ENCODE measurements at regions of chr5 and their contacts with region 1.

Region 1: DNA sequence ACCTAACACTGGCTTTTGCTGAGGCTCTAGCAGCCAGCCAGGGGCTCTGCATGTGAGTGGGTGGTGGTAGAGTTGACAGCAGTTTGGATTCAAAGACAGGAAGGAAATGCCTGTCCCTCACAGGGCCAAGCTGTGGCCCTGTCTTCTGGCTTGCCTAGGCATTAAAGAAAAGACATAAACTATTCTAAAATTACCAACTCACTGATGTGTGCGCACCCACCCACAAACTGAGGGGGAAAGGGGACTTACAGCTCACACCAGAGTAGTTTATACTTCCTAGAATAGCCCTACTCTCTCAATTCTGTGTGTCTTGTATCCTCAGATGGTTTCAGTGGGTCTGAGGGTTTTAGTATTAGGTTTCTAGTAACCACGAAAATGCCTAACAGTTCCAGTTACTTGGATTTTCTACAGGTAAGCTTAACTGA is 18.3 kb upstream of the IL13 start:
- DNase-seq: peak; percentile 52
- H3K4me3 Mint-ChIP-seq: no peak overlapping the region
- H3K27ac Mint-ChIP-seq: peak overlapping the region; percentile 18
- H3K4me1 Mint-ChIP-seq: peaks cover 76% of the 10 kb centered on the region
- H3K27me3 Mint-ChIP-seq: no peaks in the 10 kb centered on the region

Region 2: GRCh38 chr5:132446669-132447068 is 193.0 kb before region 1 on chr5:
- CTCF ChIA-PET with region 1: no interaction called
- POLR2A ChIA-PET with region 1: no interaction called
- intact Hi-C with region 1: no loop called
- DNase-seq: peak; percentile 8
- H3K4me3 Mint-ChIP-seq: no peak overlapping the region
- H3K27ac Mint-ChIP-seq: no peak overlapping the region
- H3K4me1 Mint-ChIP-seq: peaks cover 63% of the 10 kb centered on the region
- H3K27me3 Mint-ChIP-seq: no peaks in the 10 kb centered on the region

Region 3: GRCh38 chr5:132466433-132467286 is 173.1 kb before region 1 on chr5:
- CTCF ChIA-PET with region 1: no interaction called
- POLR2A ChIA-PET with region 1: no interaction called
- intact Hi-C with region 1: no loop called
- DNase-seq: peak; percentile 85
- H3K4me3 Mint-ChIP-seq: peak overlapping the region; percentile 68
- H3K27ac Mint-ChIP-seq: peak overlapping the region; percentile 75
- H3K4me1 Mint-ChIP-seq: peaks cover 86% of the 10 kb centered on the region
- H3K27me3 Mint-ChIP-seq: no peaks in the 10 kb centered on the region

Region 4: DNA sequence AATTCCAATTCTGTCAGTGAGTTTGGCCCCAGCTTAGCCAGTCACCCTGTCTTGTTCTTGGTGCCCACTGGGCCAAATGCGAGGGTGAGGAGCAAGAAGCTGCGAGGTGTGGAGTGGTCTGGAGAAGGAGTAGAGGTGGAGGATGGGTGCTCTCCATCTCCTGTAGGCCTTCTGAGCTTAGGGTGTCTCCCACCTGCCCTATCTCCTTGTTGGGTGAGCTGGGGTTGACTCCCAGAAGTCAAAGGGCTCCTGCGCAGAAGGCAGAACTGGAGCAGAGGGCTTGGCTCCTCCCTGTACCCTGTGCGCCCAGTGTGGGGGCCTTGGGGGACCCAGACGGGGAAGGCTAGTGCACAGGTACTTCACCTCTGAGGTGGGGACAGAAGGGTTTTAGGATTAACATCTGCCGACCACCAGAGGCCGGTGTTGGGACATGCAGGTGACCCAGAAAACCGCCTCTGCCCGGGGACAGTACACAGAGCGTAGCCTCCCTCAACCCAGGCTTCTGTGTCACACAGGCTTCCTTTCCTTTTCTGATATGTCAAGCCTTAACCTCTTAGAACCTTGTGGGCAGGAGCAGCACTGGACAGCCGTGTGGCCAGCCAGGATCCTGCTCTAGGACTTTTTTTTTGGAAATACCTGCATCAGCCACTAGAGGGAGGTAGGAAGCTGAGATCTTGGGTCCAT is 113.3 kb before region 1 on chr5:
- CTCF ChIA-PET with region 1: interaction called, 10 read pairs
- POLR2A ChIA-PET with region 1: interaction called, 3 read pairs
- intact Hi-C with region 1: loop called (anchors 1 kb)
- DNase-seq: peak; percentile 48
- H3K4me3 Mint-ChIP-seq: no peak overlapping the region
- H3K27ac Mint-ChIP-seq: no peak overlapping the region
- H3K4me1 Mint-ChIP-seq: peaks cover 38% of the 10 kb centered on the region
- H3K27me3 Mint-ChIP-seq: peaks cover 2% of the 10 kb centered on the region

Region 5: GRCh38 chr5:132622608-132623007 is 17.1 kb before region 1 on chr5:
- CTCF ChIA-PET with region 1: interaction called, 3 read pairs
- POLR2A ChIA-PET with region 1: interaction called, 4 read pairs
- intact Hi-C with region 1: loop called (anchors 1 kb)
- DNase-seq: no peak
- H3K4me3 Mint-ChIP-seq: no peak overlapping the region
- H3K27ac Mint-ChIP-seq: no peak overlapping the region
- H3K4me1 Mint-ChIP-seq: peaks cover 13% of the 10 kb centered on the region
- H3K27me3 Mint-ChIP-seq: no peaks in the 10 kb centered on the region

Region 6: DNA sequence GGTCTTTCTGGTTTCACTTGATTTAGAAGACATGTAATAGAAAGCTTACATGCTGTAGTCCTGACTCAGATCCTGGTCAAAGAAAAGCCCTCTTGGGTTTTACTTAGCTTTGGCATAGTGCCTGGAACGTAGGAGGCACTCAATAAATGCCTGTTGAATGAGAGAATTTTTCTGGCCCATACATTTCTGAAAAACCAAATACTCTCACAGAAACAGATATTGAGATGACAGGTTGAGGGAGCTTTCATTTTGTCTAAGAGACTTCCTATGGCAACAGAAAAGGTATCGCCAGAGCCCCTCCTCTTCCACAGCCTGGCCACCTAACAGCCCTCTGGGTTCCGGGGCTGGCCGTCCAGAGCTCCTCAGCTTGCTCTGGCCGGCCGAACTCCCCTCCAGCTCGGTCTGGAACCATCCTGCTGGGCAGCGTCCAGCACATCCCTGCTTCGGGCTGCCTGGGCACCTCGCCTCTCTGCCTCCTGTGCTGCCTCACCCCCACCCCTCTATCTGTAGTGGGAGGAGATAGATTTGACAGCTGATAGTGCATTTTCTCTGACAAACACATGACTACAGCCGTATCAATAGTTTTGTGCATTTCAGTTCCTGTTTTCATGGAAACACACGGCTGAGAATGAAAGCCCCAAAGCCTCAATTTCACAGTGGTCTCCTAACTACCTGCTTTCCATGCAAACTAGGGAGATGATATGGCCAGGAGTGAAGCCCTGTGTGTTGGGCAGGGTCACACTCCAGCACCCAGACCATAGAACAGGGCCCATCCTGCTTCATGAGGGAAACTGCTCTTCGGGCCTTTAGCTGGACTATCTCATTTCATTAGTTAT is 35.2 kb after region 1 on chr5:
- CTCF ChIA-PET with region 1: interaction called, 11 read pairs
- POLR2A ChIA-PET with region 1: interaction called, 17 read pairs
- intact Hi-C with region 1: loop called (anchors 1 kb)
- DNase-seq: no peak
- H3K4me3 Mint-ChIP-seq: peak overlapping the region; percentile 28
- H3K27ac Mint-ChIP-seq: peak overlapping the region; percentile 73
- H3K4me1 Mint-ChIP-seq: peaks cover 27% of the 10 kb centered on the region
- H3K27me3 Mint-ChIP-seq: no peaks in the 10 kb centered on the region

Region 7: GRCh38 chr5:132736853-132737833 is 97.4 kb after region 1 on chr5 and contains the start of gene KIF3A:
- CTCF ChIA-PET with region 1: no interaction called
- POLR2A ChIA-PET with region 1: interaction called, 9 read pairs
- intact Hi-C with region 1: loop called (anchors 1 kb)
- DNase-seq: peak; percentile 99
- H3K4me3 Mint-ChIP-seq: peak within 1 kb of the TSS; percentile 84
- H3K27ac Mint-ChIP-seq: peak within 1 kb of the TSS; percentile 78
- H3K4me1 Mint-ChIP-seq: peaks cover 35% of the 10 kb centered on the region
- H3K27me3 Mint-ChIP-seq: peaks cover 2% of the 10 kb centered on the region
- total RNA-seq, gene KIF3A: 12.1 to 16.1 TPM

Measured in activated CD4-positive, alpha-beta memory T cell treated with anti-CD3 and anti-CD28 coated beads for 36 hours (primary cell).